Activated CD4-positive, alpha-beta memory T cell treated with anti-CD3 and anti-CD28 coated beads, Interleukin-2, amount 10 ng/mL, durations not matched to agents 7 days and 5 days (primary cell): ENCODE measurements at regions of chr18 and their contacts with region 1.

Region 1: GRCh38 chr18:9102508-9103375 is at the start of gene NDUFV2:
- DNase-seq: peak; percentile 99
- H3K4me3 Mint-ChIP-seq: peak within 1 kb of the TSS; percentile 94
- H3K27ac Mint-ChIP-seq: peak within 1 kb of the TSS; percentile 96
- H3K4me1 Mint-ChIP-seq: peaks cover 46% of the 10 kb centered on the region
- H3K27me3 Mint-ChIP-seq: no peaks in the 10 kb centered on the region
- total RNA-seq, gene NDUFV2: 288 to 295 TPM

Region 2: DNA sequence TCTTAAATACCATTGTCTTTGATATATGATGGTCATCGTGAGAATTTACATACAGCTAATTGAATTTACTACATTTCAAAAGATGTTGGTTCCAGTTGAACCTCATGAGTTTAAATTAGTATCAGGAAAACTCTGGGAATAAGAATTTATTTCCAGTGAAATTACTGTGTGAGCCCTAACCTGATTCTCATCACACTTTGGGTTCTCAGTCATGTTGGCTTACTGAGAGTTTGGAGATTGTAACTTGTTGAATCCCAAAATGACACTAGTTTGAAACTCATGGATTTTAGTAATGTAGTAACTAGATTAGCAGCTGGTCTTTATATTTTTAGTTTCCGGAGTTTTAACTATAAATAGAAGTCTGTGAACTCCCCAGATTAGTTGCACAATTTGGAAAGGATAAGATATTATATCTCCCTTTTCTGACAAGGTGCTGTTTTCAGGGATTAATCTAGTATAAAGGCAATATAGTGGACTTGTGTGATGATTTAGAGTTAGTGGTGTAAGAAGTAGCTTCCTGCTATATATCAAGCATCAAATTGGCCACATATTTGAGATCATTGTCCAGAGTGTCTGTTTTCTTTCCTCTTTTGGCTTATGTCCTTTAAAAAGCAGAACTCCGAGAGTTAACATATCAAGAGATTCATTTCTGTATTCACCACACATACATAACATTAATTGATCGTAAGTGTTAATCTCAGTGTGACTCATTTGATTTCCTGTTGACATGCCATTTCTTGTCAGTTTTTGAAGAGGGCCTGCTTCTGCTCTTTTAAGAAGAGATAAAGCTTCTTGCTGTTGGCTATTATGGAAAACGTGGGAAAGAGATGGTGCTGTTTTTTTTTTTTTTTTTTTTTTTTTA is 15.5 kb after region 1 on chr18:
- CTCF ChIA-PET with region 1: interaction called, 15 read pairs
- POLR2A ChIA-PET with region 1: interaction called, 281 read pairs
- DNase-seq: no peak
- H3K4me3 Mint-ChIP-seq: peak overlapping the region; percentile 50
- H3K27ac Mint-ChIP-seq: peak overlapping the region; percentile 76
- H3K4me1 Mint-ChIP-seq: peaks cover 78% of the 10 kb centered on the region
- H3K27me3 Mint-ChIP-seq: no peaks in the 10 kb centered on the region

Region 3: DNA sequence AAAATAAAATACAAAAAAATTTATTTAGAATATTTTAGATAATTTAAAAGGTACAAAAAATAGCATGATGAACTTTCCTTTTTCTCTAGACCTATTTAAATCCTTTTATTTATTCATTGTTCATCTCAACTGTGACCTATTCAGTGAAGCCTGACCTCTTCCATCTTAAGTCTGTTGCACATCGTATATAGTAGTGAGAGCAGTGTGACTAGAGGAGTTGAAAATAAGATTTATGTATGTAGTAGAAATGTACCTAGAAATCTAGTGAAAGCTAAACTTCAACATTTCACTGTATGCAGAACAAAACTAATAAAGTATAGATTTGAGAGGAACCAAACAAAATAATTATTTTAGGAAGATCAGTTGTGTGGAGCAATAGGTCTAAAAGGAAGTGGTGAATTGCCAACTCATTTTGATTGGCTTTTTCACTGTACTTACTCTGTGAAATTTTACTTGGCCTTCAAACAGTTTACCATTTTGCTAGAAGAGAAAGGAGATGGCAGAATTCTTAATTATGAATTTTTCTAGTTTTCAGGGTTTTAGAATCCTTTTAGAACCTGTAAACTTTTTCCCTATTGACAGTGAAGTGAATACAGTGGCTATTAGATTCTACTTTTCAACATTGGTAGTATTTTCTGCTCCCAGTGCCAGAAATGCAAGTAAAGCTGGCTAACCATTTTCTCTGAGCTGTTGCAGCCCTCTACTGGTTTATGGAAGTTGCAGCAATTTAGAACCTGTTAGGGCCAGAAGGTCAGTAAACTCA is 44.9 kb after region 1 on chr18:
- CTCF ChIA-PET with region 1: interaction called, 3 read pairs
- POLR2A ChIA-PET with region 1: interaction called, 752 read pairs
- DNase-seq: peak; percentile 30
- H3K4me3 Mint-ChIP-seq: peak overlapping the region; percentile 26
- H3K27ac Mint-ChIP-seq: peak overlapping the region; percentile 81
- H3K4me1 Mint-ChIP-seq: peaks cover 73% of the 10 kb centered on the region
- H3K27me3 Mint-ChIP-seq: no peaks in the 10 kb centered on the region